Heart right ventricle (tissue), 16 donors: ENCODE measurements at regions of chr22 and their contacts with region 1.

Region 1: DNA sequence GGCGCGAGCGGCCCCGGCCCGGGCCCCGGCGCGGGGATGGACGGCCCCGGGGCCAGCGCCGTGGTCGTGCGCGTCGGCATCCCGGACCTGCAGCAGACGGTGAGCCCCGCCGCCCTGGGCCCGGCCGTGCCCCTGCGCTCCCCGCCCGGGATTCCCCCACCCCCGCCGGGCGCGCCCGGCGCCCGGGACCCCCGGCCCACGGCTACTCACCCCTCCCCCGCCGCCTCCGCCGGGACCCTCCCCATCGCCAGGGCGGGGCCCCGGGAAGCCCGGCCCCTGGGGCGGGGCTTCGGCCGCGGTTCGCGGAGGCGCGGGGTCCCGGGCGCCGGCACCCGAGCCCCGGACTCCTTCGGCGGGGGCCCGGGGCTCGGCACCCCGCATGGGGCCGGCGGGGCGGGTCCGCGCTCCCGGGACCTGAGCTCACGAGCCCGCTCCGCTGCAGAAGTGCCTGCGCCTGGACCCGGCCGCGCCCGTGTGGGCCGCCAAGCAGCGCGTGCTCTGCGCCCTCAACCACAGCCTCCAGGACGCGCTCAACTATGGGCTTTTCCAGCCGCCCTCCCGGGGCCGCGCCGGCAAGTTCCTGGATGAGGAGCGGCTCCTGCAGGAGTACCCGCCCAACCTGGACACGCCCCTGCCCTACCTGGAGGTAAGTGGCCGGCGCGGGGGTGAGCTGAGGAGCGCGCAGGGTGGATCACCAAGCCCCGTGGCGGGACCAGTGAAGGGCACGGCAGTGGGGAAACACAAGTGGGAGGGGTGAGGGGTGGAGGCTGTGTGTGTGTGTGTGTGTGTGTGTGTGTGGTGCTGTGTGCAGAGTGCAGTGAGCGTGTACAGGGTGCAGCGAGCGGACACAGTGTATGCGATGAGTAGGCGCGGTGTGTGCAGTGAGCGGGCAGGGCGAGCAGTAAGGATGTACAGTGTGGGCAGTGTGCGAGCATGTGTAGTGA is 2.3 kb downstream of the SHANK3 start:
- DNase-seq: no peak
- ATAC-seq: no peak
- H3K4me3 ChIP-seq: peak overlapping the region; percentile 37 to 67 (median 57)
- H3K27ac ChIP-seq: peak overlapping the region; percentile 40 to 83 (median 68)
- H3K4me1 ChIP-seq: peaks cover 0 to 69% (median 29%) of the 10 kb centered on the region in 9 donors
- H3K27me3 ChIP-seq: peaks cover 6 to 57% (median 32%) of the 10 kb centered on the region in 7 donors
- CTCF ChIP-seq: no peak

Region 2: DNA sequence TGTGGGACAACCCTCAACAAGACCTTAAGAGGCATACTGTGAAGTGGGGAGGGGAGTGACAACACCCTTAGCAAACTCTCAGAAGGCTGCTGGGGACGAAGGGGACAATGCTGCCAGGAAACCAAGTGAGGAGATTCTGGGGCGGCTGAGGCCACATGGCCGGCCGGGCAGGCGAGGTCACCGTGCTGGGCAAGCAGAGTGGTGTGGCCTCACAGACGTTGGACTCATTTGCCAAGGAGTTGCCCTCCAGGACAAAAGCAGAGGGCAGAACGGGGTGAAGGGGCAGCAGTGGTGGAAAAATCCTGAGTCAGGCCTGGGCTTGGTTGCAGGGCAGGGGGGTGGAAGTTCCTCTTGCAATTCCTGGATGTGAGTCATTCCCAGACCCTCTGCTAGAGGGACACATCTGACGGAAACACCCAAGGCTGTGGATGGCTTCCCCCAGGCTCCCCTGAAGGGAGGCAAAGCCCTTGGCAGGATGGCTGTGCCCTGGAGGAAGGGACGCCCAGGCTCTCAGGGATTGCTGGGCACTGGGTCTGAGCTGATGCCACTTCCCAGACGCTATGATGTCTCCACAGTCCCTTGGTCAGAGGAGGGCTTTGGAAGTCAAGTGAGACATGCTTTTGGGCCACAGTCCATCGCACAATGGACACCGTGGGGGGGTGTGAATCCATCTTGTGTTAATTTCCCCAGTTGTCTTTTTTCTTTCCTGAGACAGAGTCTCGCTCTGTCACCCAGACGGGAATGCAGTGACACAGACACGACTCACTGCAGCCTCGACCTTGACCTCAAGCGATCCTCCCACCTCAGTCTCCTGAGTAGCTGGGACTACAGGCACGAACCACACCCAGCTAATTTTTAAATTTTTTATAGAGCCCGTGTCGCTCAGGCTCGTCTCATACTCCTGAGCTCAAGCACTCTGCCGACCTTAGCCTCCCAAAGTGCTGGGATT is 18.5 kb before region 1 on chr22:
- intact Hi-C with region 1: loop called in 3 of 10 experiments (anchors 1 to 2 kb)
- DNase-seq: peak; percentile 30 to 75
- ATAC-seq: peak; percentile 76 to 95 (median 92)
- H3K4me3 ChIP-seq: peak overlapping the region in 3 of 10 donors; percentile 15 to 25 (median 22)
- H3K27ac ChIP-seq: peak overlapping the region; percentile 54 to 87 (median 78)
- H3K4me1 ChIP-seq: peaks cover 0 to 43% (median 19%) of the 10 kb centered on the region in 9 donors
- H3K27me3 ChIP-seq: peaks cover 0 to 30% (median 8%) of the 10 kb centered on the region in 7 donors
- CTCF ChIP-seq: no peak